ENCODE measurements at regions of chr11 and their contacts with region 1.

Region 1: DNA sequence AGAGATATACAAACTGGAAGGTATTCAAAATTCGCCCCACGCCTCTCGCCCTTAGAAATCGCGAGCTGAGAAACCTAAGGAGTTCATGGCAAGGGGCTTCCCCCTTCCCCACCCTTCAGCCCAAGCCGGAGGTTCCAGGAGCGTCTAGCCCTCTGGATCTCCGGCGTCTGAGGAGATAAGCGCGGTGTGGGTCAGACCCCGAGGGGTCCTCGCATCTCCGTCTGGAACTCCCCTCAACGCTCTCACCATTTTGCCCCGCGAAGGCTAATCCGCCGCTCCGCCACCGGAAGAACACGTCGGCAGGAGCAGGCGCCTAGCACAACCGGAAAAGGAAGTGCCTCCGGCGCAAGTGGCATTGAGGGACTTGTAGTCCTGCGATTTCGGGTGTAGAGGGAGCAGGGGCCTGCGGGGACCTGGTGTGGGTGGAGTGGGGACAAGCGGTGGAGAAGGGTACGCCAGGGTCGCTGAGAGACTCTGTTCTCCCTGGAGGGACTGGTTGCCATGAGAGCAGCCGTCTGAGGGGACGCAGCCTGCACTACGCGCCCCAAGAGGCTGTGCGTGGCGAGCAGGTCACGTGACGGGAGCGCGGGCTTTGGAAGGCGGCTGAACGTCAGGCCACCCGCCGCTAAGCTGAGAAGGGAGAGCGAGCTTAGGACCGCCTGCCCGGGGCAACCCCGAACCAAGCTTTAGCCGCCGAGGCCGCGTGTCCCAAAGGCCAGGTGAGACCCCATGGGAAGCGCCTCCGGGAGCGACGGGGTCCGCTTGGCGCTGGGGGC is at the starts of genes FEN1 and TMEM258:
- DNase-seq: peak; percentile 92
- ATAC-seq: peak; percentile 93
- H3K4me3 Mint-ChIP-seq: peak within 1 kb of the TSS; percentile 86
- H3K27ac Mint-ChIP-seq: peak within 1 kb of the TSS; percentile 100
- H3K4me1 Mint-ChIP-seq: peaks cover 54% of the 10 kb centered on the region
- H3K27me3 Mint-ChIP-seq: no peaks in the 10 kb centered on the region
- total RNA-seq, gene FEN1: 146 TPM
- total RNA-seq, gene TMEM258: 154 to 163 TPM

Region 2: GRCh38 chr11:61778920-61779650 is 13.4 kb before region 1 on chr11:
- CTCF ChIA-PET with region 1: interaction called, 11 read pairs
- POLR2A ChIA-PET with region 1: interaction called, 7 read pairs
- DNase-seq: no peak
- ATAC-seq: no peak
- H3K4me3 Mint-ChIP-seq: no peak overlapping the region
- H3K27ac Mint-ChIP-seq: no peak overlapping the region
- H3K4me1 Mint-ChIP-seq: peaks cover 15% of the 10 kb centered on the region
- H3K27me3 Mint-ChIP-seq: peaks cover 9% of the 10 kb centered on the region

Region 3: DNA sequence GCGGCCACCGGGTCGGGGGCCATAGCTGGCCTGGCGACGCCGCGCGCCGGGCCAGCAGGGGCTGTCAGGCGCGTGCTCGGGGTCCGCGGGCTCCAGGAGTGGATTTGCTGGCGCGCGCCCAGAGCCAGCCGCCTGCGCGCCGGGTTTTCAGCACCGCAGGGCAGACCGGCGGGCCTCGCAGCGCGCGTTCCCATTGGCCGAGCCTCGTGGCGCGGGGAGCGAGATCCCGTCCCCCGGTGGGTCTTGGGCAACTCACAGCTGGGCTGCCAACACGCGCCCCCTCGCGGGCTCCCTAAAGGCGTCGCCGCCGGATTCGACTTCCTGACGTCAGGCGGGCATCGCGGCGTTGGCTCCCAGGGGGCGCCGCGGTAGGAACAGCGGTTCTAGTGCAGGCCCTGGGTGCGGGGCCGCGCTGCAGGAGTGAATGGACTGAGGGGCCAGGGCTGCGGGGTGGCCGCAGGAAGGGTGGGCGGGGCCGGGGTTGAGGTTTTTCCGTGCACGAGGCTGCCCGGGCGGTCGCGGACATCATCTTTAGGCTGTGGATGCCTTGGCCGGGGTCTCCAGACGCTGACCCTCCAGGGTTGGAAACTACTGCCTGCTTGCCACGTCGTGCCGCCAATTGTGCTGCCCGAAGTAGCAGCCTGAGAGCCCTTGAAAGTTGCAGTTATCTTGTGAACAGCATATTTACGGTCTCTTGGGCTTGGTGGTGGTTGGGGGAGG is 24.4 kb after region 1 on chr11 and contains the start of gene FADS1:
- CTCF ChIA-PET with region 1: interaction called, 129 read pairs
- POLR2A ChIA-PET with region 1: interaction called, 37 read pairs
- DNase-seq: peak; percentile 92
- ATAC-seq: peak; percentile 74
- H3K4me3 Mint-ChIP-seq: peak within 1 kb of the TSS; percentile 98
- H3K27ac Mint-ChIP-seq: peak within 1 kb of the TSS; percentile 97
- H3K4me1 Mint-ChIP-seq: peaks cover 23% of the 10 kb centered on the region
- H3K27me3 Mint-ChIP-seq: no peaks in the 10 kb centered on the region
- total RNA-seq, gene FADS1: 84.1 to 92.8 TPM

Region 4: DNA sequence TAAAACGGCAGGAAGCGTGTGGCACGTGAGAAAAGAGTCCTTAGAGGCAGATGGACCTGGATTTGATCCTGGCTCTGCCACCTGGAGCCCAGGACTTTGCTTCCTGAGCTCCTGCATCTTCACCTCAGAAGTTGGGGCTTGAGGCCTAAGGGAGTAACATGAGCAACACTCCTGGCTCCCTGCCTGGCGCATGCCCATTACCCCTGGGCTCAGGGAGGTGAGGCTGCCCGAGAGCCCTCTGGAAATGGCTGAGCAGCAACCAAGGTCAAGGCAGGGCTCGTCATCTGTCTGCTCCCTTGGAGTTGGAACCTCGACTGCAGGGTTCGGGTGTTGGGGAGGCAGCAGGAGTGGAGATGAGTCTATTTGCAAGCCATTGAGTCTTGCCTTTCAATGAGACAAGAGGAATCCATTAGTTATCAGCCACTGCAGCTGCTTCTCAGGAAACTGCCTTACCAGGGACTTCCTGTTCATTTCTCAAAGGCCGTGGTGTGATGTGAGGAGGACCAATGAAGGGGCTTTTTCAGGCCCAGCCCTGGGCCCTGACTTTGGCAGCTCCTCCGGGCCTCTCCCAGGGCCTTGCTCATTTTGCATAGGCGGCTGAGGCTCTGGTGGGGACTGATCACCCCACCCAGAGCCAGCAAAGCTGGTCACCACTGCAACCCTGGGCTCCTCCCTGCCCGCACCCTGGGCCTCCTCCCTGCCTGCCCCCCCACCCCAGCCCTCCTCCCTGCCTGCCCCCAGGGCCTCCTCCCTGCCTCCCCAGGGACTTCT is 42.0 kb after region 1 on chr11:
- CTCF ChIA-PET with region 1: interaction called, 45 read pairs
- POLR2A ChIA-PET with region 1: interaction called, 39 read pairs
- DNase-seq: peak; percentile 91
- ATAC-seq: peak; percentile 99
- H3K4me3 Mint-ChIP-seq: peak overlapping the region; percentile 77
- H3K27ac Mint-ChIP-seq: peak overlapping the region; percentile 95
- H3K4me1 Mint-ChIP-seq: peaks cover 69% of the 10 kb centered on the region
- H3K27me3 Mint-ChIP-seq: no peaks in the 10 kb centered on the region

Region 5: GRCh38 chr11:61891331-61892084 is 99.0 kb after region 1 on chr11 and contains the start of gene FADS3:
- CTCF ChIA-PET with region 1: interaction called, 27 read pairs
- POLR2A ChIA-PET with region 1: no interaction called
- DNase-seq: peak; percentile 58
- ATAC-seq: peak; percentile 85
- H3K4me3 Mint-ChIP-seq: peak within 1 kb of the TSS; percentile 79
- H3K27ac Mint-ChIP-seq: peak within 1 kb of the TSS; percentile 30
- H3K4me1 Mint-ChIP-seq: peaks cover 4% of the 10 kb centered on the region
- H3K27me3 Mint-ChIP-seq: peaks cover 4% of the 10 kb centered on the region
- total RNA-seq, gene FADS3: 3.8 to 4.5 TPM

Region 6: DNA sequence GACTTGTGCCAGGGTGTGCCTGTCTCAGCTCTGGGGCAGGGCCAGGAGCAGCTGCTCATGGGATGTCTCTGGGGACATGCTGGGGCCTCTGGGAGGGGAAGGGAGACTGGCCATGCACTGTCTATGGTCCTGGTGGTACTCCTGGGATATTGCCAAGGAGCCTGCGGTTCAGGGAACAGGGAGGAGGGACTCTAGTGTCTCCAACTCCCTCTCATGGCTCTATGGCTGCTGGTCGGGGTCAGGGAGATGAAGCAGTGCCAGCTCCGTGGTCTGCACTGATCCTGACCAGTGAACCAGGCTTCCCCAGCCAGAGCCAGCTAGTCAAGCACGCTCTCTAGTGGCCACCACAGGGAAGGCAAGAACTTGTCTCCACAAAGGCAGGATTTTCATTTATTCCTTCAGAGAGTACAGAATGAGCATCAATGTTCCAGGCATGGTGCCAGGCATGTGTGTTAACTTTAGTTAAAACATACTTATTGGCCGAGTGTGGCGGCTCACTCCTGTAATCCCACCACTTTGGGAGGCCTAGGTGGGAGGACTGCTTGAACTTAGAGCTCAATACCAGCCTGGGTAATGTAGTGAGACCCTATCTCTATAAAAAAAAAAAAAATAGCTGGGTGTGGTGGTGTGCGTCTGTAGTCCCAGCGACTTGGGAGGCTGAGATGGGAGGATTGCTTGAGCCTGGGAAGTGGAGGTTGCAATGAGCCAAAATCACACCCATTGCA is 155.2 kb after region 1 on chr11:
- CTCF ChIA-PET with region 1: interaction called, 50 read pairs
- POLR2A ChIA-PET with region 1: no interaction called
- DNase-seq: peak; percentile 77
- ATAC-seq: peak; percentile 83
- H3K4me3 Mint-ChIP-seq: no peak overlapping the region
- H3K27ac Mint-ChIP-seq: no peak overlapping the region
- H3K4me1 Mint-ChIP-seq: no peaks in the 10 kb centered on the region
- H3K27me3 Mint-ChIP-seq: peaks cover 8% of the 10 kb centered on the region